CD8-positive, alpha-beta T cell (primary cell): ENCODE measurements at regions of chr2 and their contacts with region 1.

Region 1: DNA sequence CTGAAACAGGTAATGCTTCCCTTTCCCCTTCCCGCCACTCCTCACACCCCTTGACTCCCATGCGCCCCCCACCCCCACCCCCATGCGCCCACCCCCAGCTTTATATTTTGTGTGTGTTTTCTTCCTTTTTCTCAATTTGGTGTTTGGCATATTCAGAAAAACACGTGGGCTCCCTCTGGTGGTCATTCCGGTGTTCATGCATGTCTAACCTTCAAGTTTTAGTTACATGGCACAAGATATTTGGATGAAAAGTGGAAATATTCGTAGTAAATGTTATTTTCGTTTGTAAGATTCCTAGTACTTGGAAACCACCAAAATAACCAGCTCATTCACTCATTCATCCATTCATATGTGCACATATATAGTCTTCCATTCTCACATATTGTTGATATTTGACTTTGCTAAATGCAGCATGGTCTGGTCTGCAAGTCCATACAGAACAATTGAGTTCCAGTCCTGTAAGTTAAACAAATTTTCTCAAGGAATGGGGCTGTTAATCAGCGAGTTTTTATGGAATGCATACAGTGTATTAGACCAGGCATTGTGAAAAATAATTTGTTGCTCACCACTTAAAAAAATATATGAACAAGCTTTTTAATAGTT is 143.6 kb upstream of the MAP3K20 start:
- DNase-seq: peak; percentile 21 to 74 (median 65)
- ATAC-seq: no peak
- H3K4me3 ChIP-seq: no peak overlapping the region
- H3K4me3 Mint-ChIP-seq: no peak overlapping the region
- H3K27ac ChIP-seq: no peak overlapping the region
- H3K27ac Mint-ChIP-seq: no peak overlapping the region
- H3K4me1 ChIP-seq: peaks cover 5% of the 10 kb centered on the region
- H3K4me1 Mint-ChIP-seq: peaks cover 7% of the 10 kb centered on the region
- H3K27me3 ChIP-seq: no peaks in the 10 kb centered on the region
- H3K27me3 Mint-ChIP-seq: no peaks in the 10 kb centered on the region
- CTCF ChIP-seq: peak; percentile 76

Region 2: GRCh38 chr2:171574149-171574795 is 1357.7 kb before region 1 on chr2:
- CTCF ChIA-PET with region 1: no interaction called
- POLR2A ChIA-PET with region 1: no interaction called
- intact Hi-C with region 1: loop called (anchors 2 to 10 kb)
- DNase-seq: peak; percentile 62 to 87 (median 78)
- ATAC-seq: peak; percentile 100
- H3K4me3 ChIP-seq: no peak overlapping the region
- H3K4me3 Mint-ChIP-seq: peak overlapping the region; percentile 42
- H3K27ac ChIP-seq: no peak overlapping the region
- H3K27ac Mint-ChIP-seq: no peak overlapping the region
- H3K4me1 ChIP-seq: no peaks in the 10 kb centered on the region
- H3K4me1 Mint-ChIP-seq: peaks cover 6% of the 10 kb centered on the region
- H3K27me3 ChIP-seq: no peaks in the 10 kb centered on the region
- H3K27me3 Mint-ChIP-seq: peaks cover 2% of the 10 kb centered on the region
- CTCF ChIP-seq: peak; percentile 97

Region 3: DNA sequence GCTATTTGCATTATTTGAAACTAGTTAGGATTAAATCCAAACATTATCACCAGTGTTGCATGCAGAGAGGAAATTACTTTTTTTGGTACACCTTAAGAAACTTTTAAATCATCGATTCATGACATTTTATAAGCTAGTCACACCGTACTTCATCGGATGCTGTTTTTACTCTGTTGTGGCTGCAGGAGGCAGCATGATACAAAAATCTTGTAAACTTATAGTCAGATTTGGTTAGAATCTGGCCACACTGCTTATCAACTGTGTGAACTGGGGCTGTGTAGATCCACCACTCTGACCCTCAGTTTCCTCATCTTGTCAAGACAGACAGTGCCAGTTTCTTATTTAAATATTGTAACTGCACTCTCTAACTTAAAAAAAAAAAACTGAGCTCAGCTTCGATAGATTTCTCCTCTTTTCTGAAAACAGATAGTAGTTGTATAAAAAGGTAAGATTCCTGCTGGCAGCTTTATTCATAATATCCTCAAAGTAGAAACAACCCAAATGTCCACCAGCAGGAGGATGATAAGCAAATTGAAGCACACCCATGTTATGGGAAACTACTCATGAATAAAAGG is 118.6 kb before region 1 on chr2:
- CTCF ChIA-PET with region 1: interaction called, 35 read pairs
- POLR2A ChIA-PET with region 1: interaction called, 3 read pairs
- intact Hi-C with region 1: no loop called
- DNase-seq: no peak
- ATAC-seq: no peak
- H3K4me3 ChIP-seq: no peak overlapping the region
- H3K4me3 Mint-ChIP-seq: no peak overlapping the region
- H3K27ac ChIP-seq: no peak overlapping the region
- H3K27ac Mint-ChIP-seq: no peak overlapping the region
- H3K4me1 ChIP-seq: no peaks in the 10 kb centered on the region
- H3K4me1 Mint-ChIP-seq: peaks cover 2% of the 10 kb centered on the region
- H3K27me3 ChIP-seq: no peaks in the 10 kb centered on the region
- H3K27me3 Mint-ChIP-seq: no peaks in the 10 kb centered on the region
- CTCF ChIP-seq: no peak

Region 4: GRCh38 chr2:172826522-172826921 is 105.5 kb before region 1 on chr2:
- CTCF ChIA-PET with region 1: no interaction called
- POLR2A ChIA-PET with region 1: no interaction called
- intact Hi-C with region 1: no loop called
- DNase-seq: no peak
- ATAC-seq: no peak
- H3K4me3 ChIP-seq: no peak overlapping the region
- H3K4me3 Mint-ChIP-seq: no peak overlapping the region
- H3K27ac ChIP-seq: no peak overlapping the region
- H3K27ac Mint-ChIP-seq: no peak overlapping the region
- H3K4me1 ChIP-seq: no peaks in the 10 kb centered on the region
- H3K4me1 Mint-ChIP-seq: no peaks in the 10 kb centered on the region
- H3K27me3 ChIP-seq: no peaks in the 10 kb centered on the region
- H3K27me3 Mint-ChIP-seq: no peaks in the 10 kb centered on the region
- CTCF ChIP-seq: no peak

Region 5: DNA sequence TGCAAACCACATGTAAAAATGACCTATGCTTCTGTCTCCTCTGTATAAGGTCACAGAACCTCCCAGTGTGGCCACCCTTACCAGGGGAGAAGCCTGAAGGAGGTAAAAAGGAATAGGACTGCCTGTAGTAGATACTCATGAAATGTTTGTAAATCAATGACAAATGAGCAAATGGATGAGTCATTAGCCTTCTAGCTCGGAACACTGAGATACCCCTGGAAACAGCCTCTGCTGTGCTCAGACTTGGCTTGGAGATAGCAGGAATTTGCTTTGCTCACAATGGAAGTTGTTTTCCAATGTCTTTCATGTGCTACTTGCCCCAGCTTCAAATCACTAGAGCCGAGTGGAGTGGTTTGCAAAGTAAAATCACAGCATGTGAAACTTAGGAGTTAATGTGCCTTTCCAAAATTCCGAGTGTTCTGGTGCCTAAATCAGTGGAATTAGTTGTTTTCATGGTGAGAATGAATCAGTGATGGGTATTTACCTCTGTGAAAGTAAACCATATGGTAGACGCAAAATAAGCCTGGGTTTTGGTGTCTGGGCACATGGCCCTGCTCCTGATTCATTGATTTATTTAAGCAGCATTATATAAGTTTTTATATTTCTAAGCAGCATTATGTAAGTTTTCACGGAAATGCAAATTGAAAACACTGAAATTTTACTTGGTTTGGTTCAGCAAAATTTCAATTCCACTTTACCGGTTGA is 10.3 kb before region 1 on chr2:
- CTCF ChIA-PET with region 1: interaction called, 11 read pairs
- POLR2A ChIA-PET with region 1: no interaction called
- intact Hi-C with region 1: no loop called
- DNase-seq: no peak
- ATAC-seq: no peak
- H3K4me3 ChIP-seq: no peak overlapping the region
- H3K4me3 Mint-ChIP-seq: no peak overlapping the region
- H3K27ac ChIP-seq: no peak overlapping the region
- H3K27ac Mint-ChIP-seq: no peak overlapping the region
- H3K4me1 ChIP-seq: no peaks in the 10 kb centered on the region
- H3K4me1 Mint-ChIP-seq: no peaks in the 10 kb centered on the region
- H3K27me3 ChIP-seq: no peaks in the 10 kb centered on the region
- H3K27me3 Mint-ChIP-seq: peaks cover 7% of the 10 kb centered on the region
- CTCF ChIP-seq: no peak

Region 6: GRCh38 chr2:172972005-172972619 is 40.1 kb after region 1 on chr2:
- CTCF ChIA-PET with region 1: interaction called, 7 read pairs
- POLR2A ChIA-PET with region 1: no interaction called
- intact Hi-C with region 1: loop called in 1 of 2 experiments (anchors 5 kb)
- DNase-seq: peak in 7 of 9 experiments; percentile 15 to 54 (median 25)
- ATAC-seq: peak; percentile 32
- H3K4me3 ChIP-seq: no peak overlapping the region
- H3K4me3 Mint-ChIP-seq: no peak overlapping the region
- H3K27ac ChIP-seq: no peak overlapping the region
- H3K27ac Mint-ChIP-seq: no peak overlapping the region
- H3K4me1 ChIP-seq: no peaks in the 10 kb centered on the region
- H3K4me1 Mint-ChIP-seq: peaks cover 18% of the 10 kb centered on the region
- H3K27me3 ChIP-seq: no peaks in the 10 kb centered on the region
- H3K27me3 Mint-ChIP-seq: peaks cover 4% of the 10 kb centered on the region
- CTCF ChIP-seq: peak; percentile 81